Caco-2 (cell line): ENCODE measurements at regions of chr12 and their contacts with region 1.

Region 1: DNA sequence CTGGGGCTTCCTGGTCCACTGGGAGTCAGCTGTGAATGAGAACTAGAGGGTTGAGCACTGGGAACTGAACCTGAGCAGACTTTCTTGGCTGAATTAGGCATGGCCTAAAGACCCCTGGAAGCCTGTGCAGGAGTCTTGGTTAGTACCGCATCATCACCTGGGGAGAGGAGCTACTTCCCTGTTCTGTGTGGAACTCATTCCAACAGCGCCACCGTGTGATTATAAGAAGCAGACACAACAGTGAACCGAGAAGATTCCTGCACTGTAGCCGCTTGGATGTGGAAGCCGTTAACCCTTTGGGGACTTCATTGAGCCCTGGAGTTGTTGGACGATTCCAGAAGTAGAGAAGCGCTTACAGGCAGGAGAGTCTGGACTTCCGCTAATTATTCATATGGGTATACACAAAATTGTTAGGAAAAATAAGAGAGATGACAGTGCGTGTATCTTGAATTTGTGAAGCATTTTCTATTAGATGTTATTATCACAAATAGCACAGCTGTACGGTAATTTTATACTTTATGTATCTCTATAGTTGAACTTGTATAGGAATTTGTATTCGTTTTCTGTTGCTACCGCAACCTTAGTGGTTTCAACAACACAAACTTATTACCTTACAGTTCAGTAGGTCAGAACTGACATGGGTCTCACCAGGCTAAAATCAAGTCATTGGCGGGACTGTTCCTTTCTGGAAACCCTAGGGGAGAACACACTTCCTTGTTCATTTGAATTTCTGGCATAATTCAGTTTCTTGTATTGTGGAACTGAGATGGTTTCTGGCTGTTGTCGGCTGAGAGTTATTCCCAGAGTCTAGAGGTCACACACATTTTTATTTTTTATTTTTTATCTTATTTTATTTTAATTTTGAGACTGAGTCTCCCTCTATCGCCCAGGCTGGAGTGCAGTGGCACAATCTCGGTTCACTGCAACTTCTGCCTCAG is 100.7 kb downstream of the C2CD5 start:
- DNase-seq: peak; percentile 84 to 85
- H3K4me3 ChIP-seq: no peak overlapping the region
- H3K4me3 Mint-ChIP-seq: no peak overlapping the region
- H3K27ac Mint-ChIP-seq: no peak overlapping the region
- H3K4me1 ChIP-seq: no peaks in the 10 kb centered on the region
- H3K4me1 Mint-ChIP-seq: no peaks in the 10 kb centered on the region
- H3K27me3 ChIP-seq: no peaks in the 10 kb centered on the region
- H3K27me3 Mint-ChIP-seq: peaks cover 3% of the 10 kb centered on the region
- CTCF ChIP-seq: peak; percentile 87 to 96

Region 2: GRCh38 chr12:21697904-21698630 is 745.6 kb before region 1 on chr12:
- CTCF ChIA-PET with region 1: interaction called, 18 read pairs
- POLR2A ChIA-PET with region 1: no interaction called
- intact Hi-C with region 1: loop called (anchors 2 kb)
- DNase-seq: peak in 1 of 2 experiments; percentile 47
- H3K4me3 ChIP-seq: no peak overlapping the region
- H3K4me3 Mint-ChIP-seq: peak overlapping the region; percentile 45
- H3K27ac Mint-ChIP-seq: peak overlapping the region; percentile 13
- H3K4me1 ChIP-seq: peaks cover 11% of the 10 kb centered on the region; the same call in 1 of the 2 replicates
- H3K4me1 Mint-ChIP-seq: peaks cover 13% of the 10 kb centered on the region
- H3K27me3 ChIP-seq: no peaks in the 10 kb centered on the region
- H3K27me3 Mint-ChIP-seq: no peaks in the 10 kb centered on the region
- CTCF ChIP-seq: peak; percentile 54 to 85

Region 3: GRCh38 chr12:22100958-22101748 is 342.5 kb before region 1 on chr12:
- CTCF ChIA-PET with region 1: interaction called, 4 read pairs
- POLR2A ChIA-PET with region 1: no interaction called
- intact Hi-C with region 1: loop called (anchors 1 kb)
- DNase-seq: peak in 1 of 2 experiments; percentile 60
- H3K4me3 ChIP-seq: no peak overlapping the region
- H3K4me3 Mint-ChIP-seq: no peak overlapping the region
- H3K27ac Mint-ChIP-seq: no peak overlapping the region
- H3K4me1 ChIP-seq: no peaks in the 10 kb centered on the region
- H3K4me1 Mint-ChIP-seq: no peaks in the 10 kb centered on the region
- H3K27me3 ChIP-seq: no peaks in the 10 kb centered on the region; the same call in 1 of the 2 replicates
- H3K27me3 Mint-ChIP-seq: peaks cover 13% of the 10 kb centered on the region
- CTCF ChIP-seq: peak; percentile 55 to 60

Region 4: GRCh38 chr12:22190969-22191368 is 252.7 kb before region 1 on chr12:
- CTCF ChIA-PET with region 1: no interaction called
- POLR2A ChIA-PET with region 1: no interaction called
- intact Hi-C with region 1: loop called (anchors 5 kb)
- DNase-seq: peak; percentile 29 to 54
- H3K4me3 ChIP-seq: no peak overlapping the region
- H3K4me3 Mint-ChIP-seq: no peak overlapping the region
- H3K27ac Mint-ChIP-seq: no peak overlapping the region
- H3K4me1 ChIP-seq: peaks cover 18% of the 10 kb centered on the region
- H3K4me1 Mint-ChIP-seq: peaks cover 13% of the 10 kb centered on the region
- H3K27me3 ChIP-seq: no peaks in the 10 kb centered on the region
- H3K27me3 Mint-ChIP-seq: peaks cover 12% of the 10 kb centered on the region
- CTCF ChIP-seq: no peak

Region 5: DNA sequence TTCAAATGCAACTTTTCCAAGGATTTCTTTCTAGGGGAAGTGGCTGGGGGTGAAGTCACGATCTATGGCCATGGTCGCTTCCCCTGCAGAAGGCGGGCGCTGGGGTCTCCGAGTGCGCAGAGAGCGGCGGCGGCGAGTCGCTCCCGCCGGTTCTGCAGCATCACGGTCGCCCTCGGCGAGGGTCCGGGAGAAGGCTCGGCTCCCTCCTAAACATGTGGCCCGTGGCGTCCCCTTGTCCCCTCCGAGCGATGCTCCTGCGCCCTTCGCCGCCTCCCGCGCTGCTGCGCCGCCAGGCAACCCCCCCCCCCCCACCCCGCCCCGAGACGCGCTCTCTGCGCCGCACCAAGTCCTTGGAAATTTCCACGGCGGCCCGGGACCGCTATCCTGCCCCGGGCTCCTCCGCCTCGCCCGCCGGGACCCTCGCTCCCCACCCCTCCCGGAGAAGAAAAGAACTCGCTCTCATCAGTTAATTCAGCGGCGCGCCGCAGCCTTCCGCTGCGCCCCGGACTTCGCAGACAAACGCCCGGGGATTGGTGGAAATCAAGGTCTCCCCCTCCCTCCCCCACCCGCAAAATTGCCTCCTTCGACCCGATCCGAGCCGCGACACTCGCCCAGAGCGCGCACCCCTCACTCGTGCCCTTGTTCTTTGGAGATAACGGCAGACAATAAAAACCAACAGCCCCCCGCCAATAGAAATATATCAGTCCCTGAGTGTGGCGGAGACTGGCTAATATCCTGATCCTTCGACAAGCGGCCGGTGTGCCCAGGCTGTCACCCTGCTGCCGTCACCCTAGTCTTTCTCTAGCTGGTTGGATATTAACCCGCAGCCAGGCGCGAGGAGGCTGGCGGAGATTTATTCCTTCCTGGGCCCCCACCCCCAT is 109.0 kb before region 1 on chr12 and contains the start of gene ST8SIA1:
- CTCF ChIA-PET with region 1: interaction called, 7 read pairs
- POLR2A ChIA-PET with region 1: no interaction called
- intact Hi-C with region 1: loop called (anchors 1 kb)
- DNase-seq: no peak
- H3K4me3 ChIP-seq: peak within 1 kb of the TSS; percentile 53
- H3K4me3 Mint-ChIP-seq: peak within 1 kb of the TSS; percentile 82
- H3K27ac Mint-ChIP-seq: no peak within 1 kb of the TSS
- H3K4me1 ChIP-seq: peaks cover 6% of the 10 kb centered on the region; the same call in 1 of the 2 replicates
- H3K4me1 Mint-ChIP-seq: no peaks in the 10 kb centered on the region
- H3K27me3 ChIP-seq: no peaks in the 10 kb centered on the region; the same call in 1 of the 2 replicates
- H3K27me3 Mint-ChIP-seq: peaks cover 25% of the 10 kb centered on the region
- CTCF ChIP-seq: no peak
- total RNA-seq, gene ST8SIA1: not detected in 2 replicates